OCI-LY7 (cell line): ENCODE measurements at regions of chr3 and their contacts with region 1.

Region 1: GRCh38 chr3:49906004-49906743 is 2.5 kb upstream of the MST1R start:
- DNase-seq: peak; percentile 57
- H3K4me3 ChIP-seq: no peak overlapping the region
- H3K27ac ChIP-seq: no peak overlapping the region
- H3K4me1 ChIP-seq: peaks cover 13% of the 10 kb centered on the region
- CTCF ChIP-seq: peak; percentile 84

Region 2: GRCh38 chr3:49839193-49839809 is 66.9 kb before region 1 on chr3:
- CTCF ChIA-PET with region 1: interaction called, 3 read pairs
- POLR2A ChIA-PET with region 1: no interaction called
- intact Hi-C with region 1: loop called (anchors 1 kb)
- DNase-seq: peak; percentile 85
- H3K4me3 ChIP-seq: no peak overlapping the region
- H3K27ac ChIP-seq: no peak overlapping the region
- H3K4me1 ChIP-seq: peaks cover 3% of the 10 kb centered on the region
- CTCF ChIP-seq: peak; percentile 97

Region 3: DNA sequence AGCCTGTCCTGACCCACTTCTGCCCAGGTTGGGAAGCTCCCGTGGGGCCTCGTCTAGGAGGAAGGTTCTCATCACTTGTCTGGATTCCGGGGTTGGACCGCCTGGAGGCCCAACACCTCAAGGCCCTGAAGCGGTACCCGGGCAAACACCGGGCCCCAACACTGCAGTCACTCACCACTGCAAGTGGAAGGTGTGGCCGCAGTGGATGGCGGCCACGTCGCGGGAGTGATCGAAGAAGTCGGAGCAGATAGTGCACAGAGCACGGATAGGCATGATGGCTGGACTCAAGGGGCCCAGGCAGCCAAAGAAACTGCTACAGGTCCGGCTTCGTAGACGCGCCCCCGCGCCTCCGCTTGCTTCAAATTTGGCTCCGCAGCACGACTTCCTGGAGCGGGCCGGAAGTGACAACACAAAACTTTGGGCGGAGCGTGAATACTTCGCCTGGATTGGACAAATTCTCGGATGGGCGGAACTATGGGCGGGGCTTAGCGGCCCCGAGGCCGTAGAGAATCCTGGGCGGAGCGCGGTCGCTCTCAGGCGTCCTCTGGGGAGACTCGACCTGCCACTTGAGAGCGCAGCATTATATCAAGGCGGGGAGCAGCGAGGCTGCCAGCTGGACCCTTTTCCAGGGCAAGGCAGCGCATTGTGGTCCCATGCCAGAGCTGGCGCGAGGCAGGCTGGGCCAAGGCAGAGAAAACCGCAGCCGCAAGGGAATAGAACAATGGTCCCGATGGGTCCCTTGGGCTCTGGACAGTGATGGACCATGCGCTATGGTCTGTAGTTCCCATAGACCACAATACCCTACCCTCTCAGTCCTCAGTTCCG is 49.8 kb before region 1 on chr3 and contains the start of gene TRAIP:
- CTCF ChIA-PET with region 1: interaction called, 5 read pairs
- POLR2A ChIA-PET with region 1: interaction called, 4 read pairs
- intact Hi-C with region 1: loop called (anchors 5 kb)
- DNase-seq: peak; percentile 98
- H3K4me3 ChIP-seq: peak within 1 kb of the TSS; percentile 89
- H3K27ac ChIP-seq: peak within 1 kb of the TSS; percentile 38
- H3K4me1 ChIP-seq: peaks cover 25% of the 10 kb centered on the region
- CTCF ChIP-seq: peak; percentile 31; the same call in 1 of the 2 replicates
- total RNA-seq, gene TRAIP: 24.4 and 38.6 TPM in 2 replicates

Region 4: GRCh38 chr3:50327943-50328691 is 421.9 kb after region 1 on chr3 and contains the start of gene TUSC2:
- CTCF ChIA-PET with region 1: no interaction called
- POLR2A ChIA-PET with region 1: no interaction called
- intact Hi-C with region 1: no loop called
- DNase-seq: peak; percentile 99
- H3K4me3 ChIP-seq: peak within 1 kb of the TSS; percentile 88
- H3K27ac ChIP-seq: peak within 1 kb of the TSS; percentile 26
- H3K4me1 ChIP-seq: peaks cover 12% of the 10 kb centered on the region
- CTCF ChIP-seq: no peak
- total RNA-seq, gene TUSC2: 24.5 and 26.9 TPM in 2 replicates